ENCODE measurements at regions of chr7 and their contacts with region 1.

Region 1: GRCh38 chr7:107743567-107744344 is at the start of gene CBLL1:
- DNase-seq: peak; percentile 99
- H3K4me3 Mint-ChIP-seq: peak within 1 kb of the TSS; percentile 93
- H3K27ac Mint-ChIP-seq: peak within 1 kb of the TSS; percentile 100
- H3K4me1 Mint-ChIP-seq: peaks cover 46% of the 10 kb centered on the region
- H3K27me3 Mint-ChIP-seq: peaks cover 3% of the 10 kb centered on the region
- total RNA-seq, gene CBLL1: 46.9 and 49.6 TPM in 2 replicates

Region 2: GRCh38 chr7:106112117-106112971 is 1631.4 kb before region 1 on chr7 and contains the start of gene SYPL1:
- intact Hi-C with region 1: loop called (anchors 5 kb)
- DNase-seq: peak; percentile 86
- H3K4me3 Mint-ChIP-seq: peak within 1 kb of the TSS; percentile 86
- H3K27ac Mint-ChIP-seq: peak within 1 kb of the TSS; percentile 88
- H3K4me1 Mint-ChIP-seq: peaks cover 47% of the 10 kb centered on the region
- H3K27me3 Mint-ChIP-seq: no peaks in the 10 kb centered on the region
- total RNA-seq, gene SYPL1: 22.3 and 24.9 TPM in 2 replicates

Region 3: DNA sequence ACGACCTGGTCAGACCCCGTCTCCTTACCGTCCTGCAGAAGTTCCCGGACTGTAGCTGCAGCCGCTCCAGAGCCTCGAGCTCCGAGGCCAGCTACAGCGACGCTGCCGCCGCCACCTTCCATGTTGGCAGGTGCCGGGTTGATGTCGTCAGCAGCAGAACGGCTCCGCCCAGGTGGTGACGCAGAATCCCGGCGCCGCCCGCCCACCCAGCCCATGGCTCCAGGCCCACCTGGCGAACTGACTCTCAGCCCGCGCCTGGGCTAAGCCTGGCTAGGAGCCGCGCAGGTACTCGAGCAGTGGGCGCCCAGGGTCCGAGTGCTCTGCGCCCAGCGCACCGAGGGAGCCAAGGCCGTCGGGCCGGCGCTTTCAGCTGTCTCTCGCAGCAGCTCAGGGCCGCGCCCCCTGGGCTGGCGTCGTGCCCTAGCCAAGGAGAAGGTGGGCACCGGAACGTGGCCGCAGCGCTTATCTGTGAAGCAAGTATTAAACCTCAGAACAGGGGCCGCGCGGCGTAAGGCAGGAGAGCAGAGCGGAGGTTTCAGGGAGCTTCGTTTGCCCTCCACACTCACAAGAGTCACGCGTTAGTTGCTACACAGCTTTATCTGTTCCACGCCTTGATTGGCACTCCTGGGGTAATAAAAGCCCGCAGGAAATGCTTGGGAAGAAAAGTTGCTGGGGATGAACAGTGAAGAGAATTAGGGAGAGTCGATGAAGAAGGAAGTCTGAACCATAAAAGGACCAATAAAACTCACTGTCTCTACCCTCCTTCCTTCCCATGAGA is 179.8 kb before region 1 on chr7 and contains the starts of genes COG5 and DUS4L:
- intact Hi-C with region 1: loop called (anchors 1 kb)
- DNase-seq: peak; percentile 75
- H3K4me3 Mint-ChIP-seq: peak within 1 kb of the TSS; percentile 89
- H3K27ac Mint-ChIP-seq: peak within 1 kb of the TSS; percentile 93
- H3K4me1 Mint-ChIP-seq: peaks cover 62% of the 10 kb centered on the region
- H3K27me3 Mint-ChIP-seq: no peaks in the 10 kb centered on the region
- total RNA-seq, gene COG5: 36.5 and 39.1 TPM in 2 replicates
- total RNA-seq, gene DUS4L: 11.8 and 13.5 TPM in 2 replicates

Region 4: DNA sequence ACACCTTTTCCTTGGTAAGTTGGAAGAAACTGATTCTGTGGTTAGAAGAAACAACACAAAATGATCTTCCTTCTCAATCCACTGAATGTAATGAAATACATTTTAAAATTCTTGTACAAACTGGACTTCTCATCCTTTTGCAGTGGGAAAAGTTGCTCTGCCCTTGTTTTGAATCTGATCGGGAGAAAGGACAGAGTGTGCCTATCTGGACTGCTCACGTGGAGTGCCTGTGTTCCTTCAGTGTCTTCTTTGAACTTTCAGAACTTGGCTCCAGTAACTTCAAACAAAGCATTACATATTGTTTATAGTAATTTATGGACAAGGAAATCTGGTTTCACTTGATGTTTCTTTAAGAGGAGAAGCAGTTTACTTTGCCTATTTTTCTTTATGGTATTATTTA is 42.2 kb after region 1 on chr7:
- intact Hi-C with region 1: loop called (anchors 1 kb)
- DNase-seq: no peak
- H3K4me3 Mint-ChIP-seq: no peak overlapping the region
- H3K27ac Mint-ChIP-seq: no peak overlapping the region
- H3K4me1 Mint-ChIP-seq: peaks cover 21% of the 10 kb centered on the region
- H3K27me3 Mint-ChIP-seq: peaks cover 5% of the 10 kb centered on the region

Region 5: DNA sequence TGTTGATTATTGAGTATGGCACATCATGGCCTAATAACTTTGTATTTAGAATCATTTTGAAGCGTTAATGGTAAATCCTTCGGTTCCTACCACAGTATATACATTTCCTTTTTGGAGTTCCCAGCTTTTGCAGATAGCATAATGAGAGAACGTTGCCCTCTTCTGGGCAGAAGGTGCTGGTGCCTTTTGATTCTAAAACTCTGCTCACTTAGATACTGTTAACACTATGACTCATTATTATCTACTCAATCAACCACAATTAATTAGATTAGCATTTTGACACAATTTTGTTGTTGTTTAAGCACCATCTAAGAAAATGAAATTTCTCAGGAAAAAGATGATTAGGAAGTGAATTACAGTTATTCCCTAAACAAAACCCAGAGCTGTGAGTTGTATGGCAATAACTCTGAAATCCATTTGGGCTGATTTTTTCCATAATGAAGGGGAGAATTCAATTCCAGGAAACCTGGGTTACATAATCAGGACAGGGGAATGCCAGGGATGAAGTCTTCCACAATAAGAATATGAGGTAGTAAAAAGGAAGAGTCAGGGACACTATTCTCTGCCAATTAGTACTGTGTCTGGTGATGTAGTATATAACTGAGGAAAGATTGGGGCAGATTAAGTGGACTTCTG is 135.8 kb after region 1 on chr7:
- intact Hi-C with region 1: loop called (anchors 1 kb)
- DNase-seq: no peak
- H3K4me3 Mint-ChIP-seq: no peak overlapping the region
- H3K27ac Mint-ChIP-seq: no peak overlapping the region
- H3K4me1 Mint-ChIP-seq: peaks cover 10% of the 10 kb centered on the region
- H3K27me3 Mint-ChIP-seq: peaks cover 8% of the 10 kb centered on the region

Region 6: GRCh38 chr7:108525985-108526767 is 782.4 kb after region 1 on chr7 and contains the start of gene PNPLA8:
- intact Hi-C with region 1: loop called (anchors 2 kb)
- DNase-seq: peak; percentile 100
- H3K4me3 Mint-ChIP-seq: peak within 1 kb of the TSS; percentile 92
- H3K27ac Mint-ChIP-seq: peak within 1 kb of the TSS; percentile 97
- H3K4me1 Mint-ChIP-seq: peaks cover 34% of the 10 kb centered on the region
- H3K27me3 Mint-ChIP-seq: peaks cover 3% of the 10 kb centered on the region
- total RNA-seq, gene PNPLA8: 16.8 and 18.3 TPM in 2 replicates